ENCODE measurements at regions of chr16 and their contacts with region 1.

Region 1: DNA sequence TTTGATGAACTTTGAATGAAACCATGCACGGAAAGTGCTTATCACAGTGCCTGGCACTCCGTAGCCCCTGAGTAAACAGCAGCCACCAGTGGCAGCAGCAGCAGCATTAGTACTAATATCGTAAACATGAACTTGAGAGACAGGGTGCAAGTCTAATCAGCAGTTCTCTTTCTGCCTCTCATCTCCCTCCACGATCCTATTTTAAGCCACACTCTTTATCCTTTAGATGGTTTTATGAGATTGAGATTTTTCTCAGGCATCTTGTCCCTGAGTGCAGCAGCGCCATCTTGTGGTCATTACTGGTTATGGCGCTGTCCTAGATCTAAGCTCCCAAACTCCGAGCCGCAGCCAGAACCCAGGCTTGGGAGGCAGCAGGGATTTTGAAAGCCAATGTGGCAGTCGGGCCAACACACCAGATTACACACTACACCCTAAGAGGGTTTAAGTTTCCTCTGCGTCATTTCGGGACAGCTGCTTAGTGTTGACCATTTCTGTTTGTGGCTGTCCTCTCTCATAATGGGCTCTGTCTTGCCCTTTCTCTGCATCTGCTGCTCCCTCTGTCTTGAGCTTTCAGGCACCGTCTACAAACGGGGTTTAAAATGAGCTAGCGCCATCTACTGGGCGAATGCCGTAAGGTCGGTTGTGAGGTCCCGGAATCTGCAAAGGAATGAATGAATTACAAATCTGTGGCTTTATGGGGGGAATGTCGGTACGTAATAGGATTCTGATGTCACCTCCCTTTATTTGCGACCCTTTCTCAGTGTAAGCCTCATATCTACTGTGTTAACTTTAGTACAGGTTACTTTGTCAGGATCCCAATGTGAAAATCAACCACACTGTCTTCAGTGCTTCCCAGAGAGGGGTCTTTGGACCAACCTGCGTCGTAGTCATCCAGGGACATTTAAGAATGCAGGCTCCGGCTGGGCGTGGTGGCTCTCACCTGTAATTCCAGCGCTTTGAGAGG is 64.5 kb downstream of the CYLD start:
- DNase-seq: peak; percentile 49
- H3K4me3 ChIP-seq: peak overlapping the region; percentile 59
- CTCF ChIP-seq: peak; percentile 83

Region 2: DNA sequence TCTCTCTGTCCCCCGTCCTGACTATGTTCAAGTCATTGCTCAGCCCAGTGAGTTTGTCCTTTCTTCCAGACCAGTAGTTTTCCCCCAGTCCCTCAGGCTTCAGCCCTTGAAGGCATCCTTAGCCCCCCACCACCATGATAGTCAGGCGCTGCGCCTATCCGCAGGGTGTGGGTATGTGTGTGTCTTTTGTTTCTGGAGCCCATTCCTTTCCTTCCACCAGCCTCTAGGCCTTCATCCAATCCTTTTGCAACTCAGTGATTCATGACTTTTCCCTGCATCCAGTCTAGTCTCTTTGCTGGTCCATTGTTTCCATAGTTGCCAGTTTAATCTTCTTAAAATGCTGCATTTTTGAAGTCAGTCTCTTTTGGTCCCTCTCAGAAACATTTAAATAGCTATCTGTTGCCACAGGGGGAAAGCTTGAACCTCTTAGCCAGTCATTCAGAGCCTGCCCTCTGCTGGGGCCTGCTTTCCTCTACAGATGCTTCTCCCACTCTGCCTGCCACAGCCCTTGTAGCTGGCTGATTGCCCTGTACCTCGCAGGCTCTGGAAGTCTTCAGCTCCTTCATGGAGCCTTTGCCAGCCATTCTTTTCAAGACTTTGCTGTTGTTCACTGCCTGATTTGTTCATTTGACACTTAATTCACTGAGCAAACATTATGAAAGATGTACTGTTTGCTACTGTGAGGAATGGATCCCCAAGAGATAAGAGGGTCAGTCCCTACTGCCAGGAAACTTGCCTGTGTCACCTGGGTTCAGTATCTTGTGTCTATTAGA is 595.9 kb before region 1 on chr16:
- CTCF ChIA-PET with region 1: interaction called, 13 read pairs
- POLR2A ChIA-PET with region 1: no interaction called
- DNase-seq: peak; percentile 75
- H3K4me3 ChIP-seq: no peak overlapping the region
- CTCF ChIP-seq: peak; percentile 91

Region 3: GRCh38 chr16:50368410-50369132 is 437.8 kb before region 1 on chr16 and contains the start of gene BRD7:
- CTCF ChIA-PET with region 1: interaction called, 58 read pairs
- POLR2A ChIA-PET with region 1: no interaction called
- DNase-seq: no peak
- H3K4me3 ChIP-seq: peak within 1 kb of the TSS; percentile 62
- CTCF ChIP-seq: peak; percentile 54

Region 4: DNA sequence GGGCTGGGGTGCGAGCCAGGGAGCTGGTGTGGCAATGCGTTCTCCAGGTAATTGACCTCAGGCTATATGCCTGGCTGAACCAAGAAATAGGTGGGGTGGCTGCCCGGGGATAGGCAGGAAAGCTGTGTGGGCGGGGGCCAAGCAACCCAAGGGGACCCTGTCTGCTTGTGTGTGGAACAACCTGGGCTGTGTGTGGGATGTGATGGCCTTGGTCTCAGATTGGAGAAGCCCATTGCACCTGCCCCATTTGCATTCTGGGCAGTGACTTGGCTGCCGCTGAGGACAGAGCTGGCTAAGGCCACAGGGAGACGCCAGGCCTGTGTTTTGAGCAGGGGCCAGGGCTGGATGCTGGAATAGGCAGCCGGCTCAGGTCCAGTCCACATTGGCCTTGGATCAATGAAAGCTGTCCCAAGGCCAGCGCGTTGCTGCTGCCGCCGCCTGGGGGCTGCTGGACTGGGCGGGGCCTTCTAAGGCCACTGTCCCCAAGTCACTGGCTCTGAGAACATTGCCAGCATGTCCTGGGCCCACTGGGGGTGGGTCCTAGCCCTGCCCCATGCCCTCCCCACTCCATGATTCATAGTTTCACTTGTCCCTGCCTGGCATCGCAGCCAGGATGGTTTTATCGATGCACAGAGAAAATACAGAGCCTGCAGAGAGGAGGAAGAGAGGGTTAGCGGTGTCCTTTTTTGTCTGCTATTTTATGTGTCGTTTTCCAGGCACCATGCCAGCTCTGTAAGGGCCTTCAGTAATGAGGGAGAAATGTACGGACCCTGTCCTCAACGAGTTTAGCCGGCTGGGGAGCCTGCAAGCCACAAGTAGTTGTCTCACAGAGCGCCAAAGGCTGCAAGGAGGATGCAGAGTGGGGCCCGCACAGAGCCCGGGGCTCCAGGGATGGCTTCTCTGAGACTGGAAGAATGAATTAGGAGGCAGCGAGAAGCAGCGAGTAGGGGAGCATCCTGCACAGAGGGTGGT is 214.3 kb before region 1 on chr16:
- CTCF ChIA-PET with region 1: interaction called, 44 read pairs
- POLR2A ChIA-PET with region 1: no interaction called
- DNase-seq: no peak
- H3K4me3 ChIP-seq: no peak overlapping the region
- CTCF ChIP-seq: no peak

Region 5: DNA sequence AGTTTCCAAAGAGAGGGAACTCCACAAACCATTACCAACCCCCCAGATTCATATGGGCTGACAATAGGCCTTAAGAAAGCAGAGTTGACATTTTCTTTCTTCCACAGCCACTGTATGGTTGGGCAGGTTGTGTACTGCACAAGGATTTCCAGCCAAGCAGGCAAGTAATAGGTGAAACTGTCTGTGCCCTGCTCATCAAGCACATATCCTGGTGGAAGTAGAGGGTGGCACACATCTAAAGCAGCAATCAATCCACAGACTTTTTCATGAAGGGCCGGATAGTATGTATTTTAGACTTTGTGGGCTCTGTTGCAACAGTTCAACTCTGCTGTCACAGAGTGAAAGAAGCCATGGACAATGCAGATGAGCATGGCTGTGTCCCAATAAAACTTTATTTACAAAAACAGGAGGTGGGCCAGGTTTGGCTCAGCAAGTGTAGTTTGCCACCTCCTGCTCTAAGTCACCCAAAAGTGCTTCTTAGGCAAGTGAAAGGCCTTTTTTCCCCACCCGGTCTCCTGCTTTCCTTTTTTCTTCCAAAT is 188.7 kb before region 1 on chr16:
- CTCF ChIA-PET with region 1: no interaction called
- POLR2A ChIA-PET with region 1: no interaction called
- DNase-seq: no peak
- H3K4me3 ChIP-seq: no peak overlapping the region
- CTCF ChIP-seq: no peak

Region 6: GRCh38 chr16:50719518-50720337 is 86.7 kb before region 1 on chr16:
- CTCF ChIA-PET with region 1: no interaction called
- POLR2A ChIA-PET with region 1: no interaction called
- DNase-seq: no peak
- H3K4me3 ChIP-seq: no peak overlapping the region
- CTCF ChIP-seq: no peak

Region 7: GRCh38 chr16:50742576-50743200 is 63.7 kb before region 1 on chr16:
- CTCF ChIA-PET with region 1: interaction called, 13 read pairs
- POLR2A ChIA-PET with region 1: no interaction called
- DNase-seq: no peak
- H3K4me3 ChIP-seq: peak overlapping the region; percentile 76
- CTCF ChIP-seq: no peak

Region 8: DNA sequence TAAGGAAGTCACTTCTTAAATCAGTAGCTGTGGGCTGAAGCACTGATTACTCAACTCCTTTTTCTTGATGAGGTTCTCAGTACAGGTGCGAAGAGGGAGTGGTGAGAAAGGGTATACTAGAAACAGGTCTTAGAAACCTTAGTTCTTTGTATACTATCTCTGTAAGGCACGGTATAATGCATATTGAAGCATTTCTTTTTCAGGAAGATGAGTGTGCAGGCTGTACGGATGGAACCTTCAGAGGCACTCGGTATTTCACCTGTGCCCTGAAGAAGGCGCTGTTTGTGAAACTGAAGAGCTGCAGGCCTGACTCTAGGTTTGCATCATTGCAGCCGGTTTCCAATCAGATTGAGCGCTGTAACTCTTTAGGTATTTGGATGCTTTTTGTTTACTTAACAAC is 25.3 kb before region 1 on chr16:
- CTCF ChIA-PET with region 1: interaction called, 59 read pairs
- POLR2A ChIA-PET with region 1: no interaction called
- DNase-seq: no peak
- H3K4me3 ChIP-seq: no peak overlapping the region
- CTCF ChIP-seq: no peak

Region 9: DNA sequence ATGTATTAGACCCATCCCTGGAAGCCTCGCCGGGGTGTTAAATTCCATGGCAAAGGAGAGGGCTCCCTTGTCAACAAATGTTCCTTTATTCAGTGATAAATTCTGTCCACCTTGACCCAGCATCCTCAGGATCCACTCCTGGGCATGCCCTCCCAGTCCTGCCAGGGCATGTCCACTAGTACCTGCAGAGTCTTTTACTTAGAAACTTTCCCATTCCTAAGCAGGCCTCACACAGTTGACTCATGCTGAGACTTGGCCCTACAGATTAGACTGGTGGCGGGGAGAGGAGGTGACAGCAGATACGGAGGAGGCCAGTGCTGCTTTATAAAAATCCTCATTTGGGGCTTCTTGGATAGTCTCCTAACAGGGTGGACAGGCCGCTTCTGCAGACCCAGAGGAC is 24.3 kb after region 1 on chr16:
- CTCF ChIA-PET with region 1: interaction called, 12 read pairs
- POLR2A ChIA-PET with region 1: no interaction called
- DNase-seq: no peak
- H3K4me3 ChIP-seq: no peak overlapping the region
- CTCF ChIP-seq: no peak

Region 10: DNA sequence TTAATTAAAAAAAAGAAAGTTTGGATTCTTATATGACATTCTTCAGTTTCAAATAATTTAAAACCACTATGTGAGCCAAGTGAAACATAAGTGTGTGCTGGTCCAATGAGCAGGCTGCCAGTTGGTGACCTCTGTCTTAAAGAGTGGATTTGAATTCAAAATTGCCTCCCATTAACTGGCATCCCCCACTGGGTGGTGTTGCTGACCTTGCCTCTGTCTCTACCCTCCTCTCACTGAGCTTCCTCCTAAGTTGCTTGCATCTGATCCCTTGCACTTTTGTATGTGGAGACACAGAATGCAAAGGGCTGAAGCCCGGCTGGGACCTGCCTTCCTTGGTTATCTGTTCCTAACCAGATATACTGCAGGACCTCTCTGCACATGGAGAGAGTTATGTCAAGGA is 96.1 kb after region 1 on chr16:
- CTCF ChIA-PET with region 1: no interaction called
- POLR2A ChIA-PET with region 1: no interaction called
- DNase-seq: no peak
- H3K4me3 ChIP-seq: no peak overlapping the region
- CTCF ChIP-seq: no peak

Region 11: GRCh38 chr16:51012396-51012795 is 206.0 kb after region 1 on chr16:
- CTCF ChIA-PET with region 1: no interaction called
- POLR2A ChIA-PET with region 1: no interaction called
- DNase-seq: no peak
- H3K4me3 ChIP-seq: no peak overlapping the region
- CTCF ChIP-seq: no peak